ENCODE measurements at regions of chr9 and their contacts with region 1.

Region 1: DNA sequence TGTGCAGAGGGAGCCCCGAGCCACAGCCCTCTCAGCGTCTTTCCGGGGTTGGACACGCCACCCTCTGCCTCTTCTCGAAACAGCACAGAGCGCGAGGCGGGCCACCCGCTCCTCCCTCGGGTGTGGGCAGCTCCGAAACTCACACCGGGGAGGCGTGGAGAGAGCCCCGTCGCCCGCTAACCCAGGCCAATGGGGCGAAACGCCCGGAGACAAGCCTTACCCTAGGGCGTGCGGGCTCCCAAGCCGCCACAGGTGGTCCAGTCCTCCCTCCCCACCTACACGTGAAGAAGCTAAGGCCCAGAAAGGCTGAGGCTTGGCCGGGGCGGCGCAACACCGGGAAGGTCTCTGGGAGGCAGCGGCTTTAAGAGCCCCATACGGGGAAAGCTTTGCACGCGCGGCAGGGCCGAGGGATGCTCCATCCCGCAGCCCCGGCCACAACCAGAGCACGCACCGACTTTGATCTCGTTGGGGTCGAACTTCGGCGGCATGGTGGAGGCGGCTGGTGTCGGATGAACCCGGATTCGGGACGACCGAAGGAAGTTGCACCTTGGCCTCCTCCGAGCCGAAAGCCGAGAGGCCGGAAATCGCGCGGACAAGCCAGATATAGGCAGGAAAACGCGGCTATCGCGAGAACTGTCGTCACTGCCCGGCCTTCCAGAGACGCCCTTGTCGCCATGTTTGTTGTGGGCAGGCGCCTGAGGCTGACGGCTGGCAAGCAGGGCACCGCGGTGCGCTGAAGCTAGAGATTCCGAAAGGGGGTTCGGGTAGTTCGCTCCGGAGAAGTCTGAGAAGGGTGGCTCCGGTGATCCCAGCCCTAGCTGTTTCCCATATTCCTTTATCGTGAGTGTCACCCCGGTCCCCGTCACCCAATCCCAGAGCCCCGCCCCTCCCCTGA is at the starts of genes LRSAM1 and RPL12:
- DNase-seq: peak; percentile 98
- total RNA-seq, gene LRSAM1: 24.4 TPM
- total RNA-seq, gene RPL12: 407 TPM

Region 2: DNA sequence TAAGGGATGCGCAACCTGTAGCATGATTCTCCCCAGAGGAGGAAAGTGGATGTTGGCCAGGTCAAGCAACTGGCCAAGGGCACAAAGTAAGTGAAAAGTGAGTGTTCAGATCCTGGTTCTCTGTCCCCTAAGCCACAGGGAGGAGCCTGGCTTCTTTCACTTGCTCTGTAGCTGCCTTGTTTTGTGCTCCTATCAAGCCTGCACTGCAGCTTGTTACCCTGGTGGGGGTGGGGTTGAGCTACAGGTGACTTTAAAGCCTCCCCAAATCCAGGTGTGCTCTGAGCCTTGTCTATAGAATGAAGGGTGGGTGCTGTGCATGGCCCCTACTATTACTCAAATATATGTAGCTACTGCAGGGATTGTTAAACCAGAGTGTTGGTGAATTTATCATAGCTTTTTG is 503.5 kb before region 1 on chr9:
- intact Hi-C with region 1: loop called (anchors 10 kb)
- DNase-seq: no peak

Region 3: DNA sequence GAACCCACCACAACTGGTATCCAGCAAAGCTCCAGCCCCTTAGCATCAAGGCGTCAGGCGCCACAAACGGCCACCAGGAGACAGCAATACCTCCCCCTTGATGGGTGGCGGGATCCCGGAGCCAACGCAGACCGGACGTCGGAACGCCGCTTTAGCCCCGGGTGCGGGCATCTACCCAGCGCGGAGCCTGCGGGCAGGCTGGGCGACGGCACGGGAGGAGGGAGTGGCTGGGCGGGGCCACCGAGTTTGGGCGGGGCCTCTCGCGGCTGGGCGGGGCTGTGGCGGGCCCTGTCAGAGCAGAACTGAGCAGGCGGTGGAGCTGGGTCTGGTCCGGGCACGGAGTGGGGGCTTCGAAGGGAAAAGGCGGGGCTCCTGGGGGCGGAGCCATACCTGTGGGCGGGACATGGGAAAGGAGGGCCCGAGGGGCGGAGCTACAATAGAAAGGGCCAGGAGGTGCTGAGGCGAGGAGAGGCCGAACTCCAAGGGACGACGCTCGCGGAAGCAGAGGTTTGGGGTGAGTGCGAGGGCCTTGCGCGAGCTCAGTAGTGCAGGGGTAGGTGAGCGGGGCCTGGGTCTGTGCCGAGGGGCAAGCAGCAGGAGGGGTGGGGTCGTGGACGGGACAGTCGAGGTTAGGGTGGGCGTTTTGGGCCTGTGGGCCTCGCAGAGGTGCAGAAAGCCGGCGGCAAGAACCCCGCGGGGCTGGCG is 226.7 kb before region 1 on chr9:
- intact Hi-C with region 1: no loop called
- DNase-seq: peak; percentile 94

Region 4: GRCh38 chr9:127396808-127397497 is 54.1 kb before region 1 on chr9 and contains the start of gene SLC2A8:
- intact Hi-C with region 1: no loop called
- DNase-seq: peak; percentile 99
- total RNA-seq, gene SLC2A8: 14.5 TPM

Region 5: GRCh38 chr9:127406799-127407509 is 44.1 kb before region 1 on chr9:
- intact Hi-C with region 1: no loop called
- DNase-seq: no peak

Region 6: DNA sequence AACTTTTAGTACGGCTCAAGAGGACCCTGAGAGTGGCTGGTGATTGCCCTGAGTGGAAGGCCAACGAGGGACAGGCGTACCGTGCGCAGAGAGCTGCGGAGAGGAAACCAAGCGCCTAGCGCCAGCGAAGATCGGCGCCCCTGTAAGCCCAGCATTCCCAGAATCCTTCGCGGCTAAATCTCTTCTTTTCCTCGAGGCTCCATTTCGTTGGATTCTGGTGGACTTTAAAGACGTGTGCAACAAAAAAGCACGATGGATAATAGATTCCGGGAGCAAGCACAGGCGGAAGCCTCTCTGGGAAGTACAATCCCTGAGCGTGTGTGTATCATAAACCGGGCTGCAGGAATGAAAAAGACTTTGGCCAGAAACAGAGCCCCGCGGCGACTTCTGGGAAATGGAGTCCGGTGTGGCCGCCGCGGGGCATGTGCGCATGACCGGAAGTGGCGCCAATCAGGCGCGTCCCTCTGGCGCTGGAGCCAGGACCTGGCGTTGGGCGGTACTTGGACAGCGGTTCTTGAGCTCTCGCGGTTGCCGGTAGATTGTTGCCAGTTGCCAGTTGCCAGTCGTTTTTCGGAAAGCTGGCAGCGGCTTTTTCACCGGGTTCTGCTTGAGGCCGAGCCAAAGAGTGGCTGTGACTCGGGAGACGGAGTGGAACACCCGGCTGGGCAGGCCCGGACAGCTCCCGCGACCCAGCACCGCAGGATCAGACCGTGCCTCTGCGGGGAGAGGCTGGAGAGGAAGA is 27.0 kb before region 1 on chr9 and contains the start of gene ZNF79:
- intact Hi-C with region 1: loop called (anchors 1 kb)
- DNase-seq: peak; percentile 98
- total RNA-seq, gene ZNF79: 5.5 TPM

Region 7: GRCh38 chr9:127568971-127569885 is 118.2 kb after region 1 on chr9:
- intact Hi-C with region 1: loop called (anchors 5 kb)
- DNase-seq: peak; percentile 90